Activated B cell treated with CpG ODN at 0.5 μM for 24 hours (primary cell): ENCODE measurements at regions of chr7 and their contacts with region 1.

Region 1: DNA sequence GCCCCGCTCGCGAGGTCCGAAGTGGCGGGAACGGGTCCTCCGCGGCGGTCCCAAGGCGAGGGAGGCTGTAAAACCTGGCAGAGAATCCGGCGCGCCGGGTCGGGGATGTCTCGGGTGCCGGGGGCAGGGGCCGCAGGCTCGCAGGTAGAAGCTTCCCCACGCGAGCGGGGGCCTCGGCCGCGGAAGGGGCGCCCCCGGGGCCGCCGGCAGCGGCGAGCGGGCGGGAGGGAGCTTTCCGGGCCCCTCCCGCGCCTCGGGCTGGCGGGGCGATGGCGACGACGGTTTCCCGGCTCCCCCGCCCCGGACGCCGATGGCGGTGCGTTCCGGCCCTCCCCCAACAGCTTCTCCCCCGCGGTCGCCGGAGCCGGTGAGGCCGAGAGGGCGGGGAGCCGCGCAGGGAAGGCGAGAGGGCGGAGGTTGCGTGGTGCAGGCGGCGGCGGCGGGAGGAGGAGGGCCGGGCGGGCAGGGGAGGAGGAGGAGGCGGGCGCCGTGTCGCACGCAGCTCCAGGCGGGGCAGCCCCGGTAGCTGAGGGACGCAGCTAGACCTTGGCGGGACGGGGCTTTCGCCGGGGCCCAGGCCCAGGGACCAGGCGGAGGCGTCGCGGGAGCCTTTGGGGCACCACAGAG is at the start of gene CUL1:
- DNase-seq: peak; percentile 75
- ATAC-seq: peak; percentile 76
- H3K4me3 Mint-ChIP-seq: peak within 1 kb of the TSS; percentile 90
- H3K27ac Mint-ChIP-seq: peak within 1 kb of the TSS; percentile 90
- H3K4me1 Mint-ChIP-seq: peaks cover 45% of the 10 kb centered on the region
- H3K27me3 Mint-ChIP-seq: no peaks in the 10 kb centered on the region
- CTCF ChIP-seq: no peak
- total RNA-seq, gene CUL1: 56.9 and 57.4 TPM in 2 replicates

Region 2: GRCh38 chr7:148575640-148576411 is 122.7 kb before region 1 on chr7:
- CTCF ChIA-PET with region 1: interaction called, 4 read pairs
- POLR2A ChIA-PET with region 1: interaction called, 4 read pairs
- intact Hi-C with region 1: loop called (anchors 1 kb)
- DNase-seq: peak; percentile 56
- ATAC-seq: peak; percentile 88
- H3K4me3 Mint-ChIP-seq: no peak overlapping the region
- H3K27ac Mint-ChIP-seq: no peak overlapping the region
- H3K4me1 Mint-ChIP-seq: peaks cover 2% of the 10 kb centered on the region
- H3K27me3 Mint-ChIP-seq: peaks cover 2% of the 10 kb centered on the region
- CTCF ChIP-seq: no peak

Region 3: DNA sequence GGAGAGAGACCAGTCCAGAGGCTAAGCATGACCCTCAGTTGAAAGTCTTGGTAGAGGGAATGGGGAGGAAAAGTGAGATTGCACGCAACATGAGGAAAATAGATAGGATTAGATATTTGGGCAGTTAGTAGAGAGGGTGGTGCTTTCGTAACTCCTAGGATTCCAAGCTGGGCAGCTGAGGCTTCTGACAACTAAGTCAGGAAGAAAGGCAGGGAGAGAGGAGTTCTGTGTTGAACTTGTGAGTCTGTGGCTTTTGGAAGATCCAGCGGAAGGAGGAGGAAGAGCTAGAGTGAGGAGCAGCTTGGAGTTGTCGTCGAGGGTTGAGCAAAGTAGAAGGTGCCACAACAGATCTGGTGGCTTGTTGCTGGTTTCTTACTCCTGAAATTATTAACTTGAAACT is 22.0 kb after region 1 on chr7:
- CTCF ChIA-PET with region 1: no interaction called
- POLR2A ChIA-PET with region 1: interaction called, 5 read pairs
- intact Hi-C with region 1: loop called (anchors 2 kb)
- DNase-seq: no peak
- ATAC-seq: no peak
- H3K4me3 Mint-ChIP-seq: no peak overlapping the region
- H3K27ac Mint-ChIP-seq: no peak overlapping the region
- H3K4me1 Mint-ChIP-seq: peaks cover 87% of the 10 kb centered on the region
- H3K27me3 Mint-ChIP-seq: no peaks in the 10 kb centered on the region
- CTCF ChIP-seq: no peak

Region 4: DNA sequence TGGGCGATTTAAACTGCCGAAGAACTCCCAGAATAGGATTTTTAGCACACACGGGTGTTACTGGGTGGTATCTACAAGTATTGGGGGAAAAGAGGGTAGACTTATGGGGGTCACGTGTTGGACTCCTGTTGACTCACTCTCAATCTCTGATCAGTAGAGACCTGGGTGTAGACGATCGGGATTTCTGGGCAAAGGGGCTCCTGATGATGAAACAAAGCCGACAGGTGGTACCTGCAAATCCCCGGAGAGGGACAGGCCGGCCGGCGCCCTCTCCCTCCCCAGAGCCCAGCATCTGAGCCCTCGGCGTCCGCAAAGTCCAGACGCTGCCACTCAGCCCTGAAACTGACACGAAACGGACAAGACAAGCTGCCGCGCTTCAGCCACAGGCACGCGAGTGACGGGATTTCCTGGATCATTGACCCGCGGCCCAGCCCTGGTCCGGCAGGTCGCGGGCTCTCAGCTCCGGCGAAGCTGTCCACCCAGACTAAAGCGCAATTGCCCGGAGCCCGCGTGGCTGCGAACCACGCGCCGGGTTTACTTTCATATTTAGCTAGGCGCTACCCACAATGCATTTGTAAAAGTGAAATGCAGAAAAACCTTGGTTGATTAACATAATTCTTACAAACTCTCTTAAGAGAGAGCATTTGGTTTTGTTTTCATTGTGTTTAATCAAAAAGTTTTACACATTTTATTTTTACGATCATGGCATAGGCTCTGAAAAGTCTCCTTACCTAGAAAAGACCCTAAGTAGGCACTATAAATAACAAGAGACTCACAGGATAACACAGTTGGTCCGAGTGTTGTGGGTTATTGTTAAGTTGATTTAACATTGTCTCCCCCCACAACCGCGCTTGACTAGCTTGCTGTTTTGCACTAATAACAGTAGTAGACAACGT is 242.4 kb after region 1 on chr7:
- CTCF ChIA-PET with region 1: no interaction called
- POLR2A ChIA-PET with region 1: interaction called, 20 read pairs
- intact Hi-C with region 1: loop called (anchors 1 kb)
- DNase-seq: peak; percentile 68
- ATAC-seq: peak; percentile 77
- H3K4me3 Mint-ChIP-seq: peak overlapping the region; percentile 97
- H3K27ac Mint-ChIP-seq: peak overlapping the region; percentile 99
- H3K4me1 Mint-ChIP-seq: peaks cover 17% of the 10 kb centered on the region
- H3K27me3 Mint-ChIP-seq: no peaks in the 10 kb centered on the region
- CTCF ChIP-seq: no peak

Region 5: GRCh38 chr7:149028346-149029109 is 330.0 kb after region 1 on chr7 and contains the start of gene PDIA4:
- CTCF ChIA-PET with region 1: no interaction called
- POLR2A ChIA-PET with region 1: interaction called, 3 read pairs
- intact Hi-C with region 1: loop called (anchors 1 kb)
- DNase-seq: peak; percentile 99
- ATAC-seq: peak; percentile 87
- H3K4me3 Mint-ChIP-seq: peak within 1 kb of the TSS; percentile 92
- H3K27ac Mint-ChIP-seq: peak within 1 kb of the TSS; percentile 89
- H3K4me1 Mint-ChIP-seq: peaks cover 39% of the 10 kb centered on the region
- H3K27me3 Mint-ChIP-seq: no peaks in the 10 kb centered on the region
- CTCF ChIP-seq: no peak
- total RNA-seq, gene PDIA4: 57.4 and 59.4 TPM in 2 replicates

Region 6: GRCh38 chr7:149497456-149498261 is 799.1 kb after region 1 on chr7 and contains the start of gene ZNF746:
- CTCF ChIA-PET with region 1: no interaction called
- POLR2A ChIA-PET with region 1: no interaction called
- intact Hi-C with region 1: loop called (anchors 5 kb)
- DNase-seq: peak; percentile 79
- ATAC-seq: peak; percentile 96
- H3K4me3 Mint-ChIP-seq: peak within 1 kb of the TSS; percentile 92
- H3K27ac Mint-ChIP-seq: peak within 1 kb of the TSS; percentile 82
- H3K4me1 Mint-ChIP-seq: peaks cover 24% of the 10 kb centered on the region
- H3K27me3 Mint-ChIP-seq: peaks cover 2% of the 10 kb centered on the region
- CTCF ChIP-seq: no peak
- total RNA-seq, gene ZNF746: 21.0 and 28.4 TPM in 2 replicates